ENCODE measurements at regions of chr19 and their contacts with region 1.

Region 1: DNA sequence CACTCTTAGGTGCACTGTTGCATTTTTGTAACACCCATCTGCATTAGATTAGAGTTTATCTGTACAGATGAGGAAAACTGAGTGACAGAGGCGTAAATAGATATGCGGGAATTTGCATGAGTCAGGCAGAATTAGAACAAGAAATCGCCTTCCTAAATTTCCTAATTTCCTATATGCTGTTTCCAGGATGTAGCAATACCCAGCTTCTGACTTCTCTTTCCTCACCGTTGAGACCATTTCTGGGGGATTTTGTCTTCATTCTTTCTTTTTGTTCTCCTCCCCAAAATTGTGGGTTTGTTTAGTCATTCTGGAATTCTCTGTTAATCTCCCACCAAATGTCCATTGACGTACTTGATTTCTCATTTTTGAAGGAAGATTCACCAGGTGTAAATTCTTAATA is 10.6 kb upstream of the ZNF792 start:
- DNase-seq: no peak
- ATAC-seq: no peak
- H3K4me3 ChIP-seq: no peak overlapping the region
- H3K4me3 Mint-ChIP-seq: no peak overlapping the region
- H3K27ac ChIP-seq: no peak overlapping the region
- H3K27ac Mint-ChIP-seq: no peak overlapping the region
- H3K4me1 ChIP-seq: peaks cover 0 to 8% of the 10 kb centered on the region in 2 donors
- H3K4me1 Mint-ChIP-seq: peaks cover 6% of the 10 kb centered on the region
- H3K27me3 ChIP-seq: peaks cover 0 to 3% (median under 1%) of the 10 kb centered on the region in 4 experiments
- H3K27me3 Mint-ChIP-seq: peaks cover 14% of the 10 kb centered on the region
- CTCF ChIP-seq: no peak

Region 2: GRCh38 chr19:34639491-34640085 is 335.1 kb before region 1 on chr19:
- CTCF ChIA-PET with region 1: interaction called, 3 read pairs
- POLR2A ChIA-PET with region 1: no interaction called
- intact Hi-C with region 1: loop called (anchors 1 kb)
- DNase-seq: peak; percentile 82
- ATAC-seq: peak; percentile 31
- H3K4me3 ChIP-seq: no peak overlapping the region
- H3K4me3 Mint-ChIP-seq: no peak overlapping the region
- H3K27ac ChIP-seq: no peak overlapping the region
- H3K27ac Mint-ChIP-seq: no peak overlapping the region
- H3K4me1 ChIP-seq: peaks cover 0 to 4% of the 10 kb centered on the region in 2 donors
- H3K4me1 Mint-ChIP-seq: peaks cover 4% of the 10 kb centered on the region
- H3K27me3 ChIP-seq: no peaks in the 10 kb centered on the region
- H3K27me3 Mint-ChIP-seq: no peaks in the 10 kb centered on the region
- CTCF ChIP-seq: peak; percentile 83

Region 3: DNA sequence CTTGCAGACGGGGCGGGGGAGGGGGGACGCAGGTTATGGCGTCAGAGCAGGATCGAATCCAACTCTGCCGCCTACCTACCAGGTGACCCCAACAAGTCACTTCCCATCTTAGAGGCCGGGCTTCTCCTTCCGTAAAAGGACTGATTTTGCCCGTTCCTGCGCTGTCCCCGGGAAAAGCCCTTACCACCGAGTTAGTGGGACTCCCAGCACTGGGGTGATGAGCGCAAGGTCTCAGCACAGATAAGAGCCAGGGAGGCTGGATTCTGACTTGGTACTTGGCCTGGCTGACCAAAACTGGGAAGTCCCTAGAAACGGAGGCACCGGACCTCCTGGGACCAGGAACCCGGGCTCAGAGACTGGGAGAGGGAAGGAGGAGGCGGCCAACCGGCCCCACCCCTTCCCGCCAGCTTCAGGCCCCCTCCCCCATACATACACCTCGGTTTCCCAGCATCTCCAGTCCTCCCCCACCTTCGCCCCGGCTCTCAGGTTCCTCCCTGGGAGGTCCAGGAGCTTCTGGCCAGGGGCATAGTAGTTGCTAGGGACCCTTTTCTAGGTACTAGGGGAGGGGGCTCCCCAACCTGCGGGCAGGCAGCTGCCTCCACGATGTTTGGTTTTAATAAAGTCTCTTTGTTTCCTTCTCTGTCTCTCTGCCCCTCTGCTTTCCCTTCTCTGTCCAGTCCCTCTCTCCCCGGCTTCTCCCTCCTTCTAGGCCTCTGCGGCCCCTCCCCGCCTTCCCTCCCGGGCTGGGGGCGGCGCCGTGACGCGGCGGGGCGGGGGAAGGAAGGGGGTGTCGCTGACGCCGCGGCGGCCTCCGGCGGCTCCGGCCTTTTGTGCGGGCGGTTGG is 25.1 kb after region 1 on chr19 and contains the start of gene GRAMD1A:
- CTCF ChIA-PET with region 1: interaction called, 6 read pairs
- POLR2A ChIA-PET with region 1: interaction called, 3 read pairs
- intact Hi-C with region 1: loop called (anchors 1 kb)
- DNase-seq: peak; percentile 77
- ATAC-seq: peak; percentile 61
- H3K4me3 ChIP-seq: peak within 1 kb of the TSS; percentile 66 to 84 (median 74)
- H3K4me3 Mint-ChIP-seq: peak within 1 kb of the TSS; percentile 93
- H3K27ac ChIP-seq: peak within 1 kb of the TSS; percentile 79 to 84
- H3K27ac Mint-ChIP-seq: peak within 1 kb of the TSS; percentile 91
- H3K4me1 ChIP-seq: peaks cover 47 to 67% of the 10 kb centered on the region in 2 donors
- H3K4me1 Mint-ChIP-seq: peaks cover 59% of the 10 kb centered on the region
- H3K27me3 ChIP-seq: no peaks in the 10 kb centered on the region
- H3K27me3 Mint-ChIP-seq: no peaks in the 10 kb centered on the region
- CTCF ChIP-seq: no peak
- total RNA-seq, gene GRAMD1A: 102 TPM in 2 replicates

Region 4: GRCh38 chr19:35013031-35013819 is 38.6 kb after region 1 on chr19:
- CTCF ChIA-PET with region 1: interaction called, 71 read pairs
- POLR2A ChIA-PET with region 1: no interaction called
- intact Hi-C with region 1: loop called (anchors 1 kb)
- DNase-seq: peak; percentile 82
- ATAC-seq: peak; percentile 95
- H3K4me3 ChIP-seq: no peak overlapping the region
- H3K4me3 Mint-ChIP-seq: peak overlapping the region; percentile 43
- H3K27ac ChIP-seq: peak overlapping the region in 1 of 2 donors; percentile 42
- H3K27ac Mint-ChIP-seq: peak overlapping the region; percentile 76
- H3K4me1 ChIP-seq: peaks cover 17 to 31% of the 10 kb centered on the region in 2 donors
- H3K4me1 Mint-ChIP-seq: peaks cover 25% of the 10 kb centered on the region
- H3K27me3 ChIP-seq: no peaks in the 10 kb centered on the region
- H3K27me3 Mint-ChIP-seq: no peaks in the 10 kb centered on the region
- CTCF ChIP-seq: peak; percentile 97

Region 5: DNA sequence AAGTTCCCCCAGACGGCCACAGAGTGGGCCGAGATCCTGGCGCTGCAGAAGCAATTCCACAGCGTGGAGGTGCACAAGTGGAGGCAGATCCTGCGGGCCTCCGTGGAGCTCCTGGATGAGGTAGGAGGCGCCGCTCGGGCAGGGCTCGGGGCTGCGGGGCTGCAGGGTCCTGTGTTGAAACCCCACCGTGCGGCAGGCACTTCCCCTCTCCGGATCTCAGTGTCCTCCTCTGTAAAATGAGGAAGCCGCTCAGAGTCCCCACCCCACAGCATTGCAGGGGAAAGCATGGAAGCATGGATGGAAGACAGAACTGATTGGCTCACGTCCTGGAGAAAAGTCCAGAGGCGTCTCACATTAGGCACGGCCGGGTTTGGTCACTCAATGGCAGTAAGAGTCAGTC is 48.8 kb after region 1 on chr19:
- CTCF ChIA-PET with region 1: no interaction called
- POLR2A ChIA-PET with region 1: no interaction called
- intact Hi-C with region 1: no loop called
- DNase-seq: no peak
- ATAC-seq: no peak
- H3K4me3 ChIP-seq: no peak overlapping the region
- H3K4me3 Mint-ChIP-seq: no peak overlapping the region
- H3K27ac ChIP-seq: no peak overlapping the region
- H3K27ac Mint-ChIP-seq: no peak overlapping the region
- H3K4me1 ChIP-seq: no peaks in the 10 kb centered on the region
- H3K4me1 Mint-ChIP-seq: peaks cover 2% of the 10 kb centered on the region
- H3K27me3 ChIP-seq: no peaks in the 10 kb centered on the region
- H3K27me3 Mint-ChIP-seq: peaks cover 2% of the 10 kb centered on the region
- CTCF ChIP-seq: no peak

Region 6: DNA sequence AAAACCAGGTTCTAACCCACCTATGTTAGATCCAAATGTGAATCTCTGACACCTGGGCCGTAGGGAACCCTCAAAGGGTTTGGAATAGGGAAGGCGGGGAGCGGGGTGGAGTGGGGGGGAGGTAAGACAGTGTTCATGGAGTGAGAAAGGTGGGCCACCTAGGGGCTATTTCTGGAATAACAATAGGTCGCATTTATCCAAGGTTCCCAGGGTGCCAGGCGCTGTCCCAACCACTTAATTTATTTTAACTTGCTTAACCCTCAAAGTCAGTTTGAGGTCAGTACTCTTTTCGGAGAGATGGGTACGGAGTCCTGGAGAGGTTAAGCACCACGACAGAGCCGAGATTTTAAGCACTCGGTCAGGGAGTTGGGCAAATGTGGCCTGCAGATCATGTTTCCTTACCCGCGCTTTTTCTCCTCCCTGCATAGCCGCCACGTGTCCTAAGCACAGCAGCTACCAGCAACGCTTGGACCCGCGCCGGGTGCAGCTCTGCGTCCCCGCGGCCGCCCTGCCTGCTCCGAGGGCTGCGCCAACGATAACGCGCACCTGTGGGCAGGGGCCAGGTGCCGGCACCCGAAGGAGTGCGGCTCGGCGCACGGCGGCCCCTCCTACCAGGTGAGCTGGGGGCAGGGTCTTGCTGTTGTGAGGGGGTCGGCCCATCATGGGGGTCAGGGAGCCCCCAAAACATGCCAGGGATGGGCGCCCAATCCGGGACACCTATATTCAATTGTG is 116.0 kb after region 1 on chr19:
- CTCF ChIA-PET with region 1: interaction called, 9 read pairs
- POLR2A ChIA-PET with region 1: interaction called, 4 read pairs
- intact Hi-C with region 1: loop called (anchors 1 kb)
- DNase-seq: peak; percentile 78
- ATAC-seq: peak; percentile 68
- H3K4me3 ChIP-seq: peak overlapping the region in 2 of 5 experiments; percentile 15 to 20
- H3K4me3 Mint-ChIP-seq: peak overlapping the region; percentile 70
- H3K27ac ChIP-seq: no peak overlapping the region
- H3K27ac Mint-ChIP-seq: no peak overlapping the region
- H3K4me1 ChIP-seq: peaks cover 50% of the 10 kb centered on the region in 2 donors
- H3K4me1 Mint-ChIP-seq: peaks cover 40% of the 10 kb centered on the region
- H3K27me3 ChIP-seq: no peaks in the 10 kb centered on the region
- H3K27me3 Mint-ChIP-seq: no peaks in the 10 kb centered on the region
- CTCF ChIP-seq: peak; percentile 82

Measured in B cell (primary cell).